ENCODE measurements at regions of chr3 and their contacts with region 1.

Region 1: GRCh38 chr3:108489771-108490170 is 20.6 kb downstream of the MYH15 start:
- DNase-seq: no peak
- H3K4me3 Mint-ChIP-seq: no peak overlapping the region
- H3K27ac Mint-ChIP-seq: no peak overlapping the region
- H3K4me1 Mint-ChIP-seq: peaks cover 4% of the 10 kb centered on the region
- H3K27me3 Mint-ChIP-seq: peaks cover 5% of the 10 kb centered on the region

Region 2: GRCh38 chr3:108662130-108662738 is 172.5 kb after region 1 on chr3:
- intact Hi-C with region 1: loop called (anchors 1 kb)
- DNase-seq: peak; percentile 17
- H3K4me3 Mint-ChIP-seq: no peak overlapping the region
- H3K27ac Mint-ChIP-seq: no peak overlapping the region
- H3K4me1 Mint-ChIP-seq: peaks cover 17% of the 10 kb centered on the region
- H3K27me3 Mint-ChIP-seq: no peaks in the 10 kb centered on the region